ENCODE measurements at regions of chr19 and their contacts with region 1.

Region 1: GRCh38 chr19:1275260-1275975 is at the start of gene FAM174C:
- DNase-seq: peak; percentile 96
- H3K4me3 ChIP-seq: peak within 1 kb of the TSS; percentile 54 to 67 (median 58)
- H3K27ac ChIP-seq: peak within 1 kb of the TSS; percentile 98 to 100 (median 100)
- H3K4me1 ChIP-seq: peaks cover 53 to 68% (median 63%) of the 10 kb centered on the region in 4 donors
- H3K27me3 ChIP-seq: no peaks in the 10 kb centered on the region
- CTCF ChIP-seq: no peak
- EP300 ChIP-seq: no peak
- POLR2A ChIP-seq: peak; percentile 75
- total RNA-seq, gene FAM174C: 72.5 to 116 (median 99.0) TPM

Region 2: DNA sequence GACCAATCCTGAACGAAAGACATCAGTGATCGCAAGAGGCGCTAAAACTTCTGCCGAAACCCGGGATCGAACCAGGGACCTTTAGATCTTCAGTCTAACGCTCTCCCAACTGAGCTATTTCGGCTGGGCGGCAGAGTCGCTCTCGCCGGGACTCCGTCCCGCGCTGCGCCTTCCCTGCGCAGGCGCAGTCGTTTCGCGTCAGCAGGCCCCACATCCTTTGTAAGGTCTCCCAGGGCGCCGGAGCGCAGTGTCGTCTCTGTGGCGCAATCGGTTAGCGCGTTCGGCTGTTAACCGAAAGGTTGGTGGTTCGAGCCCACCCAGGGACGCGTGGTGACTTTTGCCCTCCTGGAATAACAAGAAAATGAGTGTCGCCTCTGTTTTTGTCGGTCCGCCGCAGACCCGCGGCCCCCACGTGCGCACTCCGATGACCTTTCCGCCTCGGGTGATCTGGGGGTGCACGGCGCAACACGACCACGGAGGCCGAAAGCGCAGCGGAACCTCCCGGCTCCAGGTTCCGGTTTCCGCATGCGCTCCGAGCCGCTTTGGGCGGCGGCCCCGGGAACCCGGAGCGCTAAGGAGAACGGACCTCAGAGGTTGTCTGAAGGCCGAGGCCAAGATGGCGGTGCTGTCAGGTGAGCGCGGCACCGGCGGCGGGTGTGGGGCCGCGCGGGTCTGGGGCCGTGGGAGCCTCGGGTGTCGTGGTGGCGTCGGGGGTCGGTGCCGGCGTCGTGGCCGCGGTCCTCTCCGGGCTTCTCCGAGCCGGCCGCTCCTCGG is 108.1 kb after region 1 on chr19 and contains the start of gene NDUFS7:
- in situ Hi-C with region 1: loop called in 2 of 4 experiments (anchors 25 kb)
- intact Hi-C with region 1: no loop called
- DNase-seq: peak; percentile 91
- H3K4me3 ChIP-seq: peak within 1 kb of the TSS; percentile 93 to 98 (median 98)
- H3K27ac ChIP-seq: peak within 1 kb of the TSS; percentile 93 to 98 (median 94)
- H3K4me1 ChIP-seq: peaks cover 15 to 24% (median 16%) of the 10 kb centered on the region in 4 donors
- H3K27me3 ChIP-seq: no peaks in the 10 kb centered on the region
- CTCF ChIP-seq: peak; percentile 12 to 76 (median 22)
- EP300 ChIP-seq: peak; percentile 6
- POLR2A ChIP-seq: peak; percentile 83
- total RNA-seq, gene NDUFS7: 32.2 to 196 (median 156) TPM

Region 3: DNA sequence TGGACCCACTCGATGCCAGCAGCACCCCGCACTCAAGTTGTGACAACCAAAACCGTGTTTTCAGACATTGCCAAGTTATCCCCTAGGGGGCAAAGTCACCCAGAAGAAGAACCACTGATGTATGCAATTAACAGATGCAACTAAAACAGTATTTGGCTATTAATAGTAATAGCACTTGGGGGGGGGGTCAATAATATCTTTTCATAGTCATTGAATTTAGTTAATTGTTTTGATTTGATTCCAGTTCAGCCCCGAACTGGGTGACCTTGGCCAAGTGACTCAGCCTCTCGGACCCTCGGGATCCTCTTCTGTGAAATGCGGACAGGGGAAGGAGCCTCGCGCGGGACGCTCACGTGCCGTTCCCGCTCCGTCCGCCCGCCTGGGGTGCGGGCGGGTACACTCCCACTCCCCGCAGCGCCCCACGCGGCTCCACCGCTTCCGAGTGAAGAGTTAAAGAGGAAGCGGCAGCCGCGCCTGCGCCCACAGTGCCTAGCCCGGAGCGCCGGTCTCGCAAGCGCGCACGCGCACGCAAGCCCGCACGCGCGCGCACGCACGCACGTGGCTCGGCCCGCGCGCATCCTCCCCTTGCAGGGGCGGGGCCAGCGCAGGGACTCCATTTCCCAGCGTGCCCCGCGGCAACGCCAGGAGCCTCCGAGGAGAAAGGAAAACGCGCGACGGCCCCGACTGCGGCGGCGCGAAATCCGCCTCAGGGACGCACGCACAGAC is 131.5 kb after region 1 on chr19:
- in situ Hi-C with region 1: no loop called
- intact Hi-C with region 1: loop called (anchors 10 kb)
- DNase-seq: peak; percentile 100
- H3K4me3 ChIP-seq: peak overlapping the region; percentile 31 to 99 (median 44)
- H3K27ac ChIP-seq: peak overlapping the region; percentile 86 to 99 (median 96)
- H3K4me1 ChIP-seq: peaks cover 29 to 48% (median 40%) of the 10 kb centered on the region in 4 donors
- H3K27me3 ChIP-seq: peaks cover 21% of the 10 kb centered on the region
- CTCF ChIP-seq: peak; percentile 26 to 78 (median 44)
- EP300 ChIP-seq: no peak
- POLR2A ChIP-seq: peak; percentile 25

Measured in transverse colon (tissue), 4 donors.